ENCODE measurements at regions of chr13 and their contacts with region 1.

Region 1: GRCh38 chr13:27424246-27425157 is at the start of gene GTF3A:
- DNase-seq: peak; percentile 81 to 93 (median 90)
- H3K4me3 ChIP-seq: peak within 1 kb of the TSS; percentile 91
- H3K4me3 Mint-ChIP-seq: peak within 1 kb of the TSS; percentile 84 to 95 (median 91)
- H3K27ac ChIP-seq: peak within 1 kb of the TSS; percentile 77
- H3K27ac Mint-ChIP-seq: peak within 1 kb of the TSS; percentile 90 to 99 (median 96)
- H3K4me1 ChIP-seq: peaks cover 50% of the 10 kb centered on the region
- H3K4me1 Mint-ChIP-seq: peaks cover 38 to 56% (median 52%) of the 10 kb centered on the region in 3 donors
- H3K27me3 ChIP-seq: no peaks in the 10 kb centered on the region
- H3K27me3 Mint-ChIP-seq: no peaks in the 10 kb centered on the region
- total RNA-seq, gene GTF3A: 296 to 323 TPM

Region 2: GRCh38 chr13:27367570-27367969 is 56.9 kb before region 1 on chr13:
- CTCF ChIA-PET with region 1: no interaction called
- POLR2A ChIA-PET with region 1: no interaction called
- DNase-seq: no peak
- H3K4me3 ChIP-seq: no peak overlapping the region
- H3K4me3 Mint-ChIP-seq: no peak overlapping the region
- H3K27ac ChIP-seq: no peak overlapping the region
- H3K27ac Mint-ChIP-seq: no peak overlapping the region
- H3K4me1 ChIP-seq: no peaks in the 10 kb centered on the region
- H3K4me1 Mint-ChIP-seq: peaks cover 0 to 2% (median 0%) of the 10 kb centered on the region in 3 donors
- H3K27me3 ChIP-seq: no peaks in the 10 kb centered on the region
- H3K27me3 Mint-ChIP-seq: peaks cover 18 to 25% of the 10 kb centered on the region in 2 donors

Region 3: DNA sequence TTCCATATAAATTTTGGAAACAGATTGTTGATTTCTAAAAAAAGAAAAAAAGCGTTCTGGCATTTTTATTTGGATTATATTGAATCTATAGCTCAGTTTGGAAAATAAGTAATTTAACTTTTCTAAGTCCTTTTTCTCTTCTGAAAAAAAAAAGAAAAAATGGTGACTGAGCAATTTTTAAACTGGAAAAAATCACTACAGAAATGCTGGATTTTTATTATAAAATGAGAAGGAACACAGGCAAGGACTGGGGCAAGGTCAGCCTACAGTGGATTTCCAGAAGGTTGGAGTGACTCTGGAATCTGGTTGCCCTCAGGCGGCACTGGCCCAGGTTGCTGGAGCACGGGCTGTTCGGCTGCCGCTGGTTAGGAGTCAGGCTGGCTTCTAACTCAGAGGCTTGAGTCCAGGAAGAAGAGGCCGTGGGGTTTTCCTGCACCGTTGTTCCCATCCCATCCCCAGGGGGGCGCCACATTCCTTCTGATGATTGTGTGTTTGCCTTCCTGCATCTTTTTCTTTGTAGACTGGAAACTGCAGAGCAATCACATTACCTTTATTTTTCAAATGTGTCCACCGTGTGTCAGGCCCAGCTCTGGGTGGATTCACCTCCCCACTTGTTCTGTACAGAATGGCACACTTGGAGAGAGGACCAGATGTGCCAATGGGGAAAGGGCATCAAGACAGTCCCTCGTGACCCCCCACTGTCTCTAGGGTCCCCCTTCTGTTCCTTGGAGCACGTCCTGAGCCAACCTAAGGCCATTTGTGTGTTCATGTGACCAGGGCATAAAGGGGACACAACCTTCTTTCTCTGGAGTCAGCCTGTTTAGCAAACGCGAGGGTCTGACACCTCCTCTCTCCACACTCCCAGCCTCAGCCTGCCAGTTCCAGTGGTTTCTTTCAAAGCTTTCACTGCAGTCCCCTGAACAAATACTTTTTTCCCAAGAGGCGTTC is 44.5 kb before region 1 on chr13:
- CTCF ChIA-PET with region 1: no interaction called
- POLR2A ChIA-PET with region 1: no interaction called
- DNase-seq: peak; percentile 20 to 60 (median 25)
- H3K4me3 ChIP-seq: no peak overlapping the region
- H3K4me3 Mint-ChIP-seq: no peak overlapping the region
- H3K27ac ChIP-seq: no peak overlapping the region
- H3K27ac Mint-ChIP-seq: no peak overlapping the region
- H3K4me1 ChIP-seq: no peaks in the 10 kb centered on the region
- H3K4me1 Mint-ChIP-seq: no peaks in the 10 kb centered on the region
- H3K27me3 ChIP-seq: no peaks in the 10 kb centered on the region
- H3K27me3 Mint-ChIP-seq: peaks cover 11 to 45% of the 10 kb centered on the region in 2 donors

Region 4: GRCh38 chr13:27406178-27406939 is 18.1 kb before region 1 on chr13:
- CTCF ChIA-PET with region 1: interaction called, 14 read pairs
- POLR2A ChIA-PET with region 1: interaction called, 3 read pairs
- DNase-seq: peak in 4 of 5 donors; percentile 12 to 60 (median 46)
- H3K4me3 ChIP-seq: no peak overlapping the region
- H3K4me3 Mint-ChIP-seq: peak overlapping the region in 2 of 7 donors; percentile 20 to 68
- H3K27ac ChIP-seq: no peak overlapping the region
- H3K27ac Mint-ChIP-seq: peak overlapping the region in 2 of 8 donors; percentile 53 to 54
- H3K4me1 ChIP-seq: peaks cover 8% of the 10 kb centered on the region
- H3K4me1 Mint-ChIP-seq: peaks cover 4 to 5% (median 5%) of the 10 kb centered on the region in 3 donors
- H3K27me3 ChIP-seq: peaks cover 7% of the 10 kb centered on the region
- H3K27me3 Mint-ChIP-seq: peaks cover 19 to 35% of the 10 kb centered on the region in 2 donors

Region 5: DNA sequence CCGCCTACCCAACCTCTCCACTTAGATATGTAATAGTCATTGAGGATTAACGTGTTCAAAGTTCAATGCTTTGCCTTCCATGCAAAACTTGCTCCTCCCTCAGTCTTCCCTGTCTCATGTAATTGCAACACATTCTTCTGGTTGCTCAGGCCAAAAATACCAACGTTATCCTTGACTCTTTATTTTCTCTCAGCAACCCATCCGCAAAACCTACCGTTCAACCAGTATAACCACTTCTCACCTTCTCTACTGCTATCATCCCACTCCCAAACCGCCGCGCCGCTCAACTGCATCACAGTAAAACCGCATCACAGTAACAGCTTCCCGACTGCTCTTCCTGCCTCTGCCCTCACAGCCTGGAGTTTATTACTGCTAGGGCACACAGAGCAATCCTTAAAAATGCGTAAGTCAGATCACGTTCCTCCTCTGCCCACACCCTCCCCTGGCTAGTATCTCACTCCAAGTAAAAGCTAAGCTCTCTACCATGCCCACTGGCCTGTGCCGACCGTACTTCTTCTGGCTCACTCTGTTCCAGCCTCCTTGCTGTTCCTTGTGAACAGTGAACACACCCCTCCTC is 17.7 kb after region 1 on chr13:
- CTCF ChIA-PET with region 1: interaction called, 74 read pairs
- POLR2A ChIA-PET with region 1: interaction called, 128 read pairs
- DNase-seq: peak in 2 of 5 donors; percentile 49 to 55
- H3K4me3 ChIP-seq: peak overlapping the region; percentile 3
- H3K4me3 Mint-ChIP-seq: peak overlapping the region; percentile 64 to 80 (median 72)
- H3K27ac ChIP-seq: no peak overlapping the region
- H3K27ac Mint-ChIP-seq: peak overlapping the region; percentile 75 to 95 (median 89)
- H3K4me1 ChIP-seq: peaks cover 47% of the 10 kb centered on the region
- H3K4me1 Mint-ChIP-seq: peaks cover 61 to 74% (median 71%) of the 10 kb centered on the region in 3 donors
- H3K27me3 ChIP-seq: no peaks in the 10 kb centered on the region
- H3K27me3 Mint-ChIP-seq: peaks cover 0 to 3% of the 10 kb centered on the region in 2 donors

Region 6: GRCh38 chr13:27449936-27450828 is 25.7 kb after region 1 on chr13 and contains the start of gene MTIF3:
- CTCF ChIA-PET with region 1: interaction called, 74 read pairs
- POLR2A ChIA-PET with region 1: interaction called, 128 read pairs
- DNase-seq: peak; percentile 95 to 99 (median 97)
- H3K4me3 ChIP-seq: peak within 1 kb of the TSS; percentile 87
- H3K4me3 Mint-ChIP-seq: peak within 1 kb of the TSS; percentile 91 to 97 (median 93)
- H3K27ac ChIP-seq: peak within 1 kb of the TSS; percentile 84
- H3K27ac Mint-ChIP-seq: peak within 1 kb of the TSS; percentile 96 to 98 (median 97)
- H3K4me1 ChIP-seq: peaks cover 42% of the 10 kb centered on the region
- H3K4me1 Mint-ChIP-seq: peaks cover 53 to 68% (median 65%) of the 10 kb centered on the region in 3 donors
- H3K27me3 ChIP-seq: no peaks in the 10 kb centered on the region
- H3K27me3 Mint-ChIP-seq: peaks cover 0 to 3% of the 10 kb centered on the region in 2 donors
- total RNA-seq, gene MTIF3: 35.7 to 37.5 TPM

Region 7: DNA sequence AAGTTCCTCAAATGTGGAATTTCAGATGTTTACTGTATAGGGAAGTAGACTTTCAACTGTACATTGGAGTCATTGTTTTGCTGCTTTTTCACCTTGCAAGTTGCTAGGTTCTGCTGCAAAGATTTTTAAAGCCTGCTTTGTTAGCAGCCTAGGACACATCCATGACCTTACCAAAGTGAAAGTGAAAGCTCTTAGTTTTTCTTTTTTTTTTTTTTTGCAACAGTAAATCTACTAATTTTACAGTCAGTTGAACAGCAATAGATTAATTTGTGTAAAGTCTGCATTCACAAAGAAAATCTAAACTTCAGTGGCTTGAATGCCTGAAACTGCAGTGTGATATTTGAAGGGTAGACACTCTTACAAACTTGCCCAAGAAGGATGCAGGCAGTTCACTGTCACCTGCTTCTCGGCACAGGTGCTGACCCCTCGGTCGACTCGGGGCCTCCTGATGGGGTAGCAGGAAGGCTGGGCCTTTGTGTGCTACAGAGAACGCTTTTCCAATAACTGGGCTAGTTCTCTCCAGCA is 30.9 kb after region 1 on chr13:
- CTCF ChIA-PET with region 1: interaction called, 74 read pairs
- POLR2A ChIA-PET with region 1: interaction called, 128 read pairs
- DNase-seq: peak in 1 of 5 donors; percentile 29
- H3K4me3 ChIP-seq: peak overlapping the region; percentile 63
- H3K4me3 Mint-ChIP-seq: peak overlapping the region; percentile 87 to 94 (median 91)
- H3K27ac ChIP-seq: peak overlapping the region; percentile 19
- H3K27ac Mint-ChIP-seq: peak overlapping the region; percentile 87 to 99 (median 97)
- H3K4me1 ChIP-seq: peaks cover 19% of the 10 kb centered on the region
- H3K4me1 Mint-ChIP-seq: peaks cover 24 to 37% (median 31%) of the 10 kb centered on the region in 3 donors
- H3K27me3 ChIP-seq: no peaks in the 10 kb centered on the region
- H3K27me3 Mint-ChIP-seq: peaks cover 3% of the 10 kb centered on the region in 2 donors

Region 8: GRCh38 chr13:27620377-27621115 is 196.0 kb after region 1 on chr13 and contains the start of gene LNX2:
- CTCF ChIA-PET with region 1: interaction called, 24 read pairs
- POLR2A ChIA-PET with region 1: interaction called, 24 read pairs
- DNase-seq: peak; percentile 94 to 98 (median 95)
- H3K4me3 ChIP-seq: peak within 1 kb of the TSS; percentile 90
- H3K4me3 Mint-ChIP-seq: peak within 1 kb of the TSS; percentile 90 to 96 (median 95)
- H3K27ac ChIP-seq: peak within 1 kb of the TSS; percentile 90
- H3K27ac Mint-ChIP-seq: peak within 1 kb of the TSS; percentile 91 to 98 (median 98)
- H3K4me1 ChIP-seq: peaks cover 34% of the 10 kb centered on the region
- H3K4me1 Mint-ChIP-seq: peaks cover 55 to 67% (median 64%) of the 10 kb centered on the region in 3 donors
- H3K27me3 ChIP-seq: no peaks in the 10 kb centered on the region
- H3K27me3 Mint-ChIP-seq: no peaks in the 10 kb centered on the region
- total RNA-seq, gene LNX2: 4.4 to 4.7 TPM

Measured in CD8-positive, alpha-beta memory T cell (primary cell).